Activated T-helper 2 cell treated with anti-CD3 and anti-CD28 coated beads, Interferon-gamma antibody, Interleukin-2, Interleukin-4, amounts not matched to agents 10 μg/mL and 5 μg/mL and 100 μg/mL, durations not matched to agents 14 hours and 24 hours and 36 hours (primary cell): ENCODE measurements at regions of chr19 and their contacts with region 1.

Region 1: DNA sequence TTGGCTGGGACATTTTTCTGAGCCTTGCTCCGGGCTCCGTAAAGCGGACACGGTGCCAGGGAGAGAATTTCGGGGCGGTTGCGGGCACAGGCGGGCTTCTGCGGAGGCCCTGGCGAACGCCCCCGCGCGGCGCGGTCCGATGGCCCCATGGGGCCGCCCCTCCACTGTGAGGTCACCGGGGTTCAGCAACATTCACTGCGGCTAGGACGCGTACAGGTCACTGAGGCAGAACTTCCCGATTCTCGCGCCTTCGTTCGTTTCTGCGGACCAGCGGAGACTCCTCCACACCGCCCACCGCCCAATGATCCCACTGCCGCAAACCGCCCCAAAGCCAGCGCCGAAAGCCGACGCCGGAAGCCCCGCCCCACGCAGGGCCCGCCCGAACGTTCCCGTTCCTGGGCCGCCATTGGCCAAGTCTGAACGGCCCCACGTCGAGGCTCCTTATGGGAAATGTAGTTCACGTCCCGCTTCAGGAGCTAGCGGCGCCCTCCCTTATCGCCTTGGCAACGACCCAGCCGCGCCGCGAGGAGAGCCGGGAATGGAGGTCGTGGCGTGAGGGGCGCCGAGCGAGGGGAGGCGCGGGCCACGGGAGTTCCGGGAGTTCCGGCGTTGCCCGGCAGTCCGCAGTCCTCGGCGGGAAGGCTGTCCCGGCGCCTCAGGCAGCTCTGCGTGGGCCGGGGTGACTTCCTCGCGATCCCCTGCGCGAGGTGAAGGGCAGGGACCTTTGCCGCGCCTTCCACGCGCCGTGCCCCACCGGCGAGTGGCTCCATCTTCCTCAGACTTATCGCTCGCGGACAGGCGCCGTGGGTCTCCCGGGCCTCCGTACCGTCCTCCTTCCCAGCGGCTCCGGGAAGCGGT is at the start of gene ZNF584:
- DNase-seq: peak; percentile 89
- H3K4me3 Mint-ChIP-seq: peak within 1 kb of the TSS; percentile 85
- H3K27ac Mint-ChIP-seq: peak within 1 kb of the TSS; percentile 90
- H3K4me1 Mint-ChIP-seq: peaks cover 32% of the 10 kb centered on the region
- H3K27me3 Mint-ChIP-seq: no peaks in the 10 kb centered on the region
- total RNA-seq, gene ZNF584: 11.2 and 12.2 TPM in 2 replicates

Region 2: DNA sequence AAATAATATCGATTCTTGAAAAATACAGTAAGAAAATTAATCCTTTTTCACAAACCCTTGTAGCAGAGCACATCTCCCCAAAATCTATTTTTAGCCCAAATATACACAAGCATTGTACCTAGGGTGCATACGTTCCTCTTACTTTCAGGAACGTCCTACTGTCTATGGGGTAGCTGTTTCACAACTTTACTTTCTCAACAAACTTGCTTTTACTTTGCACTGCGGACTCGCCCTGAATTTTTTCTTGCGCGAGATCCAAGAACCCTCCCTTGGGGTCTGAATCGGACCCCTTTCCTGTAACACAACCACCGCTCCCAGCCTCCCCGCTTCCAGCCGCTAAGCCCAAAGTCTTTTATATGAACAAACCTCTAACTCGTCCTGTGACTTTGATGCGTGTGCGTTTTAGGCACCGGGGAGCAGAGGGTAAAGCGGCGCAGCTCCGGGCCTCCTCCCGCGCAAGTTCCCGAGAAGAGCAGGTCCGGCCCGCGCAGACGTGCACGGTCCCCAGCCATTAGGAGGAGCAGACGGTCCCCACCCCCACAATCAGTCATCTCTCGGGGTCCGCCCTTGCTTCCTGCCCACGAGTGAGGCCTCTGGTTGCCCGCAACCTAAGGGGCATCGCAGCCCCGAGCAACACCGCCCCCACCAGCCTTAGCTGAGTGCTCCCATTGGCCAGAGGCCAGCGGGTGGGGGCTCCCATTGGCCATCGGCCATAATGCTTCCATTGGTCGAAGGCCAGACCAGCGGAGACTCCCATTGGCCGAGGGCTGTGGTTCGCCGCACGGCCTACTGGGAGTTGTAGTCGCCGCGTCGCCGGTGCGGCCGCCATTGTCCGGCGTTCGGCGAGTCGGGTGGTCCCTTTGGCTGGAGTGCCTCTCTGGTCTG is 130.0 kb before region 1 on chr19 and contains the start of gene ZNF8:
- intact Hi-C with region 1: loop called (anchors 1 kb)
- DNase-seq: peak; percentile 96
- H3K4me3 Mint-ChIP-seq: peak within 1 kb of the TSS; percentile 94
- H3K27ac Mint-ChIP-seq: peak within 1 kb of the TSS; percentile 94
- H3K4me1 Mint-ChIP-seq: peaks cover 21% of the 10 kb centered on the region
- H3K27me3 Mint-ChIP-seq: no peaks in the 10 kb centered on the region
- total RNA-seq, gene ZNF8: 4.7 and 5.3 TPM in 2 replicates

Region 3: GRCh38 chr19:58386576-58387337 is 21.6 kb before region 1 on chr19 and contains the start of gene RPS5:
- intact Hi-C with region 1: loop called (anchors 1 kb)
- DNase-seq: peak; percentile 96
- H3K4me3 Mint-ChIP-seq: peak within 1 kb of the TSS; percentile 96
- H3K27ac Mint-ChIP-seq: peak within 1 kb of the TSS; percentile 94
- H3K4me1 Mint-ChIP-seq: peaks cover 29% of the 10 kb centered on the region
- H3K27me3 Mint-ChIP-seq: no peaks in the 10 kb centered on the region
- total RNA-seq, gene RPS5: 1,217 and 1,244 TPM in 2 replicates

Region 4: GRCh38 chr19:58475714-58476497 is 67.5 kb after region 1 on chr19 and contains the start of gene ZNF446:
- intact Hi-C with region 1: loop called (anchors 2 kb)
- DNase-seq: peak; percentile 97
- H3K4me3 Mint-ChIP-seq: peak within 1 kb of the TSS; percentile 88
- H3K27ac Mint-ChIP-seq: peak within 1 kb of the TSS; percentile 99
- H3K4me1 Mint-ChIP-seq: peaks cover 18% of the 10 kb centered on the region
- H3K27me3 Mint-ChIP-seq: no peaks in the 10 kb centered on the region
- total RNA-seq, gene ZNF446: 6.6 and 6.9 TPM in 2 replicates